ENCODE measurements at regions of chr9 and their contacts with region 1.

Region 1: DNA sequence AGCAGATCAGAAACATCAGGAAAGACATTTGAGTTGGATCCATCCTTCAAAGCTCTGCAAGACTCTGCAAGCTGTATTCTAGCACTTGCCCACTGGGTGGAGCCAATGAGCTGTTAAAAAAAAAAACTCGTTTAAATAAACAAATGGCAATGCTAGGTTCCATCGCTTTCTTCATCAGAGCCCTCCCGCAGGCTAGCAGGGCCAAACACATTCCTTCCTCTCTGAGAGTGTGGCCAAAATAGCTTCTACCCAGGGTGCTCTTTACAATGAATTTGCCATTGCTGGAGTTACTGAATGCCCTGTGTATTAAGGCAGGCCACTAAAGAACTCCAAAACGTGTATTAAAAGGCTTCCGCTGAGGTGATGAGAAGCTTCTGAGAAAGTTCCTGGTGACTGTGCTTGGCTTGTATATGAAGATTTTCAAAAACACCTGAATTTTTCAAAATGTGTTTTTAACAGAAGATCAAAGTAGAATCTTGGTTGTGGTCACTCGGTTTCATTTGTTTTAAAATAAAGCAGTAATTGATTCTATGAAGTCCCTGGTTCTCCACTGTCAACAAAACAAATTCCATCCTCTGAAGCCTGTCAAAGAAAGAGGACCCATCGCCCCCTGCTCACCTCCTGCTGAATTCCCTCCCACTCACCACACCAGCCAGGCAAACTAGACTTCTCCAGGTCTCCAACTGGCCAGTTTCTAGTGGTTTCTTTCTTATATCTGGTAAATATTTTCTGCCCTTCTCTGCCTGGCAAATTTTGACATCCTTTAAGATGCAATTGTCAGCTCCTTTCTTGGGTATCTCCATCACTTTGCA is 36.5 kb upstream of the EQTN start:
- DNase-seq: no peak

Region 2: GRCh38 chr9:27377147-27377807 is 43.8 kb after region 1 on chr9:
- intact Hi-C with region 1: no loop called
- DNase-seq: no peak

Region 3: DNA sequence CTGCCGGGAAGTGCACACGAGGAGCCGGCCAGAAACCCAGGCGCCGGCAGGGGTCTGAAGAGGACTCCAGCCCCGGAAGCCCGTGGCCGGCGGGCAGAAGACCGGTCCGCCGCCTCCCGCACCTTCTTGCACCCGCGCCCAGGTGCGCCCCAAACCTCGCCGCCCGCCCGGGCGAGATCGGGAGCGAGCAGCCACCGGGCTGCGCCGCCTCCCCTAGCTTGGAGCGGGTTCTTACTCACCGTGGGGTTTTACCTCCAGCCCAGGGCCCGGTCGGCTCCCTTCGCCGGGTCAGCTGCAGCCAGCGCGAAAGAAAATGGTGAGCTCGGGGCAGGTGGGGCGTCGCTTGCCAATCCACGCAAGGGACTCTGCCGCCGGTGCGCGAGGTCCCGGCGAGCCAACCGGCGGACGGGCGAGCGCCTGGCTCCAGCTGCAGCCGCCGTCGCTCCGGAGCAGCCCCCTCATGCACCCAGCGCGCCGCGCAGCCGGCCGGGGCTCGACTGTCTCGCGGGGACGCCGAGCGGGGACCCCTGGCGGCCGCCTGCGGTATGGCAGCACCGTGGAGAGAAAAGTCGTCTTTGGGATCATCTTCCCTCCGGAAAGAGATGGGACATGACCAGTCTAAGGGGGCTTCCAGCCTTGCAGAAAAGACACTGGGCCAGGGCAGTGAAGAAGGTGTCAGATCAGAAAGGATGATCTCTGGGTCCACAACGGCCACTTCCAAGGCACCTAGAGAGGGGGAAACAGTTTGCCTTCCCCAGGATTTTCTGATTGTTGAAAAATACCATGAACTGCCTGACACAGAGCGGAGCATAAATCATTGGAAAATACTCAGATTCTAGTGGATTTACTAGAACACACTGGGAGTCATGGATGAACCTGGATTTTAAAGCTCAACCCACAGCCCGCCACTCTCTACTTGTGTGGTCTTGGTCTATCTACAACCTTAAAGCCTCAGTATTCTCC is 196.2 kb after region 1 on chr9 and contains the start of gene MOB3B:
- intact Hi-C with region 1: loop called in 1 of 2 experiments (anchors 5 kb)
- DNase-seq: peak; percentile 95
- total RNA-seq, gene MOB3B: 3.2 to 4.0 TPM

Region 4: GRCh38 chr9:27548055-27548741 is 214.8 kb after region 1 on chr9:
- intact Hi-C with region 1: loop called (anchors 5 kb)
- DNase-seq: no peak